Endothelial cell of umbilical vein (primary cell): ENCODE measurements at regions of chr13 and their contacts with region 1.

Region 1: DNA sequence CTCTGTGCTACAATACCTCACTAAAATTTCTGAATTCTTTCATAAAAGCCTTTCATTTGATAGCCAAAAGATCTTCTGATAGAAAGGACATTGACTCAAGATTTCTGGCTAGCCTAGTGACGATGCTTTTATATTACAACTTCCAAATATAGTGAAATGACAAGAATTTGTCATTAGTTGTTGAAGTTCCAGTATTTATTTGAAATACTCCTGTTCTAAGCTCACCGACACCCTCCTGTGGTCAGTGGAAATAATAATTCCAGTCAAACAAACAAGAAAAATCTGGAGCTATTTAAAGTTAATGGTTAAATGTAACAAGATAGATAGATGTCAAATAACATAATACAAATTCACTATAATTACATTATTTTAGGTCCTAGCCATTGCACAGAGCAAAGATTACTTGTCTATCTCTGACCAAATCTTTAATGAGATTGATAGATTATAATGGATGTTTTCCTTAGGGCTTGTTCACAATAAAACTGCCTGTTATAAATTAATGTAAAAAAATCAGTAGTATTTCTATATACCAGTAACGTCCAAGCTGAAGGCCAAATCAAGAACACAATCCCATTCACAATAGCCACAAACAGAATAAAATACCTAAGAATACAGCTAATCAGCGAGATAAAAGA is 195.5 kb downstream of the RGCC start:
- DNase-seq: peak; percentile 88
- H3K4me3 ChIP-seq: no peak overlapping the region
- H3K27ac ChIP-seq: peak overlapping the region; percentile 43
- H3K4me1 ChIP-seq: peaks cover 27% of the 10 kb centered on the region
- H3K27me3 ChIP-seq: no peaks in the 10 kb centered on the region
- CTCF ChIP-seq: peak; percentile 12 to 44
- POLR2A ChIP-seq: no peak

Region 2: GRCh38 chr13:41075034-41075433 is 577.8 kb before region 1 on chr13:
- CTCF ChIA-PET with region 1: interaction called, 8 read pairs
- POLR2A ChIA-PET with region 1: no interaction called
- dilution Hi-C with region 1: no loop called
- intact Hi-C with region 1: loop called (anchors 1 kb)
- DNase-seq: peak; percentile 51
- H3K4me3 ChIP-seq: no peak overlapping the region
- H3K27ac ChIP-seq: peak overlapping the region; percentile 2
- H3K4me1 ChIP-seq: peaks cover 9% of the 10 kb centered on the region
- H3K27me3 ChIP-seq: no peaks in the 10 kb centered on the region
- CTCF ChIP-seq: peak; percentile 31 to 33
- POLR2A ChIP-seq: no peak

Region 3: GRCh38 chr13:41352935-41353840 is 299.7 kb before region 1 on chr13:
- CTCF ChIA-PET with region 1: interaction called, 13 read pairs
- POLR2A ChIA-PET with region 1: no interaction called
- dilution Hi-C with region 1: no loop called
- intact Hi-C with region 1: loop called (anchors 1 kb)
- DNase-seq: peak; percentile 87
- H3K4me3 ChIP-seq: no peak overlapping the region
- H3K27ac ChIP-seq: peak overlapping the region; percentile 72
- H3K4me1 ChIP-seq: peaks cover 12% of the 10 kb centered on the region
- H3K27me3 ChIP-seq: no peaks in the 10 kb centered on the region
- CTCF ChIP-seq: peak; percentile 59 to 69
- POLR2A ChIP-seq: no peak

Region 4: DNA sequence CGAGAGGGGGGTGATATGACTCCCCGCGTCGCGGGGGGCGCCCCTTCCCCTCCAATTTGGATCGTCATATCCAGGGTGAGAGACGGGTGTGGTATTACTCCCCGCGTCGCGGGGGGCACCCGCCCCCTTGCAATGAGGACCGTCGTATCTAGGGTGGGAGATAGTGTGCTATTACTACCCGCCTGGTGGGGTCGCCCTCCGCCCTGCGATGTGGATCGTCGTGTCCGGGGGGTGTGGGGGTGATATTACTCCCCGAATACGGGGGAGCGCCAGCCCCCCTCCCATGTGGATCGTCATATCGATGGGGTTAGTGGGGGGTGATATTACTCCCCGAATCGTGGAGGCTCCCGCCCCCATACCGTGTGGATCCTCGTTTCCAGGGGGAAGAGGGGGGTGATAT is 224.7 kb before region 1 on chr13:
- CTCF ChIA-PET with region 1: interaction called, 11 read pairs
- POLR2A ChIA-PET with region 1: no interaction called
- dilution Hi-C with region 1: no loop called
- intact Hi-C with region 1: loop called (anchors 1 kb)
- DNase-seq: no peak
- H3K4me3 ChIP-seq: peak overlapping the region; percentile 27 to 33 (median 30)
- H3K27ac ChIP-seq: no peak overlapping the region
- H3K4me1 ChIP-seq: peaks cover 6% of the 10 kb centered on the region
- H3K27me3 ChIP-seq: peaks cover 0 to 4% of the 10 kb centered on the region in 2 experiments
- CTCF ChIP-seq: peak; percentile 38 to 48
- POLR2A ChIP-seq: no peak

Region 5: GRCh38 chr13:41562083-41562482 is 90.8 kb before region 1 on chr13:
- CTCF ChIA-PET with region 1: interaction called, 12 read pairs
- POLR2A ChIA-PET with region 1: no interaction called
- dilution Hi-C with region 1: no loop called
- intact Hi-C with region 1: loop called (anchors 10 kb)
- DNase-seq: peak; percentile 49
- H3K4me3 ChIP-seq: no peak overlapping the region
- H3K27ac ChIP-seq: no peak overlapping the region
- H3K4me1 ChIP-seq: peaks cover 31% of the 10 kb centered on the region
- H3K27me3 ChIP-seq: no peaks in the 10 kb centered on the region
- CTCF ChIP-seq: no peak
- POLR2A ChIP-seq: no peak

Region 6: GRCh38 chr13:41613984-41614661 is 38.7 kb before region 1 on chr13:
- CTCF ChIA-PET with region 1: interaction called, 22 read pairs
- POLR2A ChIA-PET with region 1: interaction called, 29 read pairs
- dilution Hi-C with region 1: no loop called
- intact Hi-C with region 1: loop called (anchors 1 kb)
- DNase-seq: peak; percentile 98
- H3K4me3 ChIP-seq: no peak overlapping the region
- H3K27ac ChIP-seq: peak overlapping the region; percentile 93
- H3K4me1 ChIP-seq: peaks cover 39% of the 10 kb centered on the region
- H3K27me3 ChIP-seq: no peaks in the 10 kb centered on the region
- CTCF ChIP-seq: no peak
- POLR2A ChIP-seq: no peak

Region 7: GRCh38 chr13:41763782-41764181 is 110.9 kb after region 1 on chr13:
- CTCF ChIA-PET with region 1: no interaction called
- POLR2A ChIA-PET with region 1: no interaction called
- dilution Hi-C with region 1: no loop called
- intact Hi-C with region 1: no loop called
- DNase-seq: no peak
- H3K4me3 ChIP-seq: no peak overlapping the region
- H3K27ac ChIP-seq: no peak overlapping the region
- H3K4me1 ChIP-seq: peaks cover 8% of the 10 kb centered on the region
- H3K27me3 ChIP-seq: no peaks in the 10 kb centered on the region
- CTCF ChIP-seq: no peak
- POLR2A ChIP-seq: no peak

Region 8: DNA sequence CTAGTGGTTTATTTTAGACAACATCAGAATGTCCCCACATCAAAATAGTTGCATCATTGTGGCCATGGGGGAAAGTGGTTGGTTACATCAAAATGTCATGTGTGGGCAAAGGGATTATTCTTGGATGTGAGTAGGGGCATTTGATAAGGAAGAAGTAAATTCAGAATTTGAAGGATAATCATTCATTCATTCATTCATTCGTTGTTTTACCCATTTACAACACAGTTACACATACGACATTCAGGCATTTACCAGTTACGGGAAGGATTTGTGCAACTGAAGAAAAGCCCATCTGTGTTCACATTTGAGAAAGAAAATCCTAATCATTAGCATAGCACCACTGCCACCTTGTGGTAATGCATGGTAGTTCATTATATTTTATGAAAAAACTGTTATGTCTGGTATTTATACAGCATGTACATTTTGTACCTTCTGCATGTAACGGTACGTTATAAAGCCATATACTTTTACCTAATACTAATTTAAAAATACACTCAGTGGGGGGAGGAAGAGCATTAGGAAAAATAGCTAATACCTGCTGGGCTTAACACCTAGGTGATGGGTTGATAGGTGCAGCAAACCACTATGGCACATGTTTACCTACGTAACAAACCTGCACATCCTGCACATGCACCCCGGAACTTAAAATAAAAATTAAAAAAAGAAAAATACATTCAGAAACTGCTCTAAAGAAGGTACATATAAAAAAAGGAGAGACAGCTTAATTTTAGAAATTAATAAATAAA is 457.7 kb after region 1 on chr13:
- CTCF ChIA-PET with region 1: interaction called, 12 read pairs
- POLR2A ChIA-PET with region 1: no interaction called
- dilution Hi-C with region 1: loop called (anchors 25 kb)
- intact Hi-C with region 1: no loop called
- DNase-seq: peak; percentile 84
- H3K4me3 ChIP-seq: no peak overlapping the region
- H3K27ac ChIP-seq: no peak overlapping the region
- H3K4me1 ChIP-seq: no peaks in the 10 kb centered on the region
- H3K27me3 ChIP-seq: no peaks in the 10 kb centered on the region
- CTCF ChIP-seq: peak; percentile 38 to 52
- POLR2A ChIP-seq: no peak